Activated CD4-positive, alpha-beta T cell treated with anti-CD3 and anti-CD28 coated beads, Interleukin-2, amount 10 ng/mL, durations not matched to agents 24 days and 14 days (primary cell): ENCODE measurements at regions of chr22 and their contacts with region 1.

Region 1: GRCh38 chr22:19629720-19630419 is 84.4 kb upstream of the SEPTIN5 start:
- DNase-seq: peak; percentile 96
- H3K4me3 Mint-ChIP-seq: no peak overlapping the region
- H3K27ac Mint-ChIP-seq: no peak overlapping the region
- H3K4me1 Mint-ChIP-seq: peaks cover 2% of the 10 kb centered on the region
- H3K27me3 Mint-ChIP-seq: peaks cover 5% of the 10 kb centered on the region

Region 2: GRCh38 chr22:19479357-19480172 is 150.3 kb before region 1 on chr22 and contains the start of gene CDC45:
- intact Hi-C with region 1: loop called (anchors 5 kb)
- DNase-seq: peak; percentile 98
- H3K4me3 Mint-ChIP-seq: peak within 1 kb of the TSS; percentile 100
- H3K27ac Mint-ChIP-seq: peak within 1 kb of the TSS; percentile 98
- H3K4me1 Mint-ChIP-seq: peaks cover 37% of the 10 kb centered on the region
- H3K27me3 Mint-ChIP-seq: no peaks in the 10 kb centered on the region
- total RNA-seq, gene CDC45: 121 and 123 TPM in 2 replicates

Region 3: GRCh38 chr22:19495562-19496323 is 134.1 kb before region 1 on chr22:
- intact Hi-C with region 1: loop called (anchors 1 kb)
- DNase-seq: no peak
- H3K4me3 Mint-ChIP-seq: no peak overlapping the region
- H3K27ac Mint-ChIP-seq: peak overlapping the region; percentile 18
- H3K4me1 Mint-ChIP-seq: peaks cover 13% of the 10 kb centered on the region
- H3K27me3 Mint-ChIP-seq: no peaks in the 10 kb centered on the region

Region 4: DNA sequence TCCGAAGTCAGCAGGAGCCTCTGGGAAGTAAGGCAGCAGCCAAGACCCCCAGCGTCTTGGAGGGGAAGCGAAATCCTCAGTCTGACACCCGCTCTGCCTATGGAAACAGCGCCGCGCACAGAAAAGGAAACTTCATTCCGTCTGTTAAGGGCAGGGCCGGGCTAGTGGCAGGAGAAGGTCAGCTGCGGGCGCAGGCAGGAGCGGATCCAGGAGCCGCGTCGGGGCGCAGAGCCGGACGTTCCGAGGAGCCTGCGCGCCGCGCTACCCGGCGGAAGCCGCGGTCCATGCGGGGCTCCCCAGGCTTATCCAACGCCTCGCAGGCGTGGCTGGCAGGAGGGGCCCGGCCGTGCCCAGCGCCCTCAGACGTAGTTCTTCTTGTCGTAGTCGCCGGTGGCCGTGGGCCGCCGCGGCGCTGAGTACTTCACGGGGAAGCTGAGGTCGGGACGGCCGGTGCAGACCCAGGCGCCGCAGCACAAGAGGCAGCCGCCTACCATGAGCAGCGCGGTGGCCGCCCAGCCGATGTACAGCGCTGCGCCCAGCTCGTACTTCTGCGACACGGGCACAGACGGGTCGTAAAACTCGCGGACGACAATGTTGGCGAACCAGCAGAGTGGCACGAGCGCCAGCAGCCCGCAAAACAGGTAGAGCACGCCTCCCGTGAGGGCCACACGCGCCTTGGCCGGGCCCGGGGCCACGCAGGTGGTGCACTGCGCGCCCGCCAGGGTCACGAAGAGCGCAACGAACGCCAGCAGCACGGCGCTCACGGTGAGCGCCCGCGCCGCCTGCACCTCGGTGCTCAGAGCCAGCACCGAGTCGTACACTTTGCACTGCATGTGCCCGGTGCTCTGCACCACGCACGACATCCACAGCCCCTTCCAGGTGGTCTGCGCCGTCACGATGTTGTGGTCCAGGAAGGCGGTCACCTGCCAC is 106.4 kb before region 1 on chr22:
- intact Hi-C with region 1: loop called (anchors 2 kb)
- DNase-seq: peak; percentile 81
- H3K4me3 Mint-ChIP-seq: peak overlapping the region; percentile 78
- H3K27ac Mint-ChIP-seq: peak overlapping the region; percentile 48
- H3K4me1 Mint-ChIP-seq: peaks cover 7% of the 10 kb centered on the region
- H3K27me3 Mint-ChIP-seq: peaks cover 19% of the 10 kb centered on the region

Region 5: GRCh38 chr22:19598054-19598855 is 31.6 kb before region 1 on chr22:
- intact Hi-C with region 1: no loop called
- DNase-seq: peak; percentile 70
- H3K4me3 Mint-ChIP-seq: peak overlapping the region; percentile 32
- H3K27ac Mint-ChIP-seq: peak overlapping the region; percentile 38
- H3K4me1 Mint-ChIP-seq: peaks cover 30% of the 10 kb centered on the region
- H3K27me3 Mint-ChIP-seq: no peaks in the 10 kb centered on the region